HAP-1 (cell line): ENCODE measurements at regions of chr1 and their contacts with region 1.

Region 1: DNA sequence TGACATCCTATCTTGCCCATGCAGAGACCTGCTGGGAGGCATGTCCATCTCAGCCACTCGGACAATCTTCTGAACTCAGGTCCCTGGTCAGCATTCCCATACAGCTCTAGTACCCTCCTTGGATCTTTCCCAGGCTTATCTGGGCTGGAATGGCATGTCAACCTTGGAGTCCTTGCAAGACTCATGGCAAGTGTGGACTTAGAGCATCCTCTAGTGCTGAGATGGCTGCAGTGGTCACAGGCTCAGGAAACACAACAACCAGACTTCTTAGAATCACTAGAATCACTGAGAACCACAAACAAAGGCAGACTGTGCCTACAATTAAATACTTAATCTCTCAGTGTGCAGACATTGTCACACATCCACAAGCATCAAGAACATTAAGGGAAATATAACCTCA is 73.1 kb upstream of the TSHB start:
- DNase-seq: no peak
- H3K4me3 ChIP-seq: no peak overlapping the region
- H3K4me1 ChIP-seq: no peaks in the 10 kb centered on the region
- H3K27me3 ChIP-seq: no peaks in the 10 kb centered on the region

Region 2: DNA sequence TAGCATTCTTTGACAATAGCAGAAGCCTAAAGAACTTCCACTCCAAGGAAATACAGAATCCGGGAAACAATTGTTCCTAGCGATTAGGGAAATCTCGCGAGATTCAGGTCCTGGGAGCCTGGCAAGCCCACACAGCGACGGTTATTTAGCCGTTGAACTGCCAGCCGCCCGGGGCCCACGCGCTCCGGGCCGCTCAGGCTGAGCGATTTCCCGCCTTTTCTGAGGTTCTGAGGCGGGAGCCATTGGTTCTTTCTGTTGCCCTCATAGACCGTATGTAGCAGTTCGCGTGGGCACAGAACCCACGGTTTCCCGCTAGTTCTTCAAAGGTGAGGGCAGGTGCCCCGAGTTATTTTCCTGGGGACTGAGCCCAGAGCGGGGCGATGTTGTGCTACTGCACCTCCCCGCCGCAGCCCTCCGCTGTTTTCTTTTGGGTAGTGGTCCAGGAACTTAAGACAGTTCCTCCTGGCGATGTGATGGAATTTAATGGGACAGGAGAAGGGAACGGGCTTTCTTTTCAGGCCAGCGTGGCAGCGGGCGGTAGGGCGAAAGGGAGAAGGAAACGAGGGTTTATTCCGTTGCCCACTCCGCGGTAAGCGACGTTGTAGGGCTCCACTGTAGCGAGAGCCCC is 101.8 kb before region 1 on chr1 and contains the start of gene SYCP1:
- in situ Hi-C with region 1: loop called (anchors 25 kb)
- DNase-seq: no peak
- H3K4me3 ChIP-seq: no peak within 1 kb of the TSS
- H3K4me1 ChIP-seq: no peaks in the 10 kb centered on the region
- H3K27me3 ChIP-seq: peaks cover 6% of the 10 kb centered on the region; the same call in 1 of the 2 replicates

Region 3: DNA sequence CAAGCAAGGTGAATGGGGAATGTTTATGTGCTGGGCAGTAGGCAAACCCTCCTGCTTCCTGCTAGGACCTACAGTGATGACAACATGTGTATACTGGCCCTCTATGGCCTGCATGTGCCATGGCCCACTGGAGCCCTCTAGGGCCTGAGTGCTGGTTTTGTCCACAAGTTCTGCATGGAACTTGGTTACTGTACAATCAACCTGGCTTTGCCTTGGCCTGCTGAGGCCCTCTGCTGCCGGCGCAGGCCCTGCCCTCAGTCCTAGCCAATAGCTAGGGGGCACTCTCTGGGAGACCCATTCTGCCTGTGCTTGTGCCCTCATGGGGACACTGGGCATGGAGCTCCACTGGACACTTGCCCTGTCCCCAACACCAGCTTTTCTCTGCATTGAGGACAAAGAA is 520.1 kb after region 1 on chr1:
- in situ Hi-C with region 1: no loop called
- DNase-seq: no peak
- H3K4me3 ChIP-seq: no peak overlapping the region
- H3K4me1 ChIP-seq: no peaks in the 10 kb centered on the region
- H3K27me3 ChIP-seq: peaks cover 3% of the 10 kb centered on the region; the same call in 1 of the 2 replicates